Esophagus muscularis mucosa (tissue), 4 donors: ENCODE measurements at regions of chr19 and their contacts with region 1.

Region 1: DNA sequence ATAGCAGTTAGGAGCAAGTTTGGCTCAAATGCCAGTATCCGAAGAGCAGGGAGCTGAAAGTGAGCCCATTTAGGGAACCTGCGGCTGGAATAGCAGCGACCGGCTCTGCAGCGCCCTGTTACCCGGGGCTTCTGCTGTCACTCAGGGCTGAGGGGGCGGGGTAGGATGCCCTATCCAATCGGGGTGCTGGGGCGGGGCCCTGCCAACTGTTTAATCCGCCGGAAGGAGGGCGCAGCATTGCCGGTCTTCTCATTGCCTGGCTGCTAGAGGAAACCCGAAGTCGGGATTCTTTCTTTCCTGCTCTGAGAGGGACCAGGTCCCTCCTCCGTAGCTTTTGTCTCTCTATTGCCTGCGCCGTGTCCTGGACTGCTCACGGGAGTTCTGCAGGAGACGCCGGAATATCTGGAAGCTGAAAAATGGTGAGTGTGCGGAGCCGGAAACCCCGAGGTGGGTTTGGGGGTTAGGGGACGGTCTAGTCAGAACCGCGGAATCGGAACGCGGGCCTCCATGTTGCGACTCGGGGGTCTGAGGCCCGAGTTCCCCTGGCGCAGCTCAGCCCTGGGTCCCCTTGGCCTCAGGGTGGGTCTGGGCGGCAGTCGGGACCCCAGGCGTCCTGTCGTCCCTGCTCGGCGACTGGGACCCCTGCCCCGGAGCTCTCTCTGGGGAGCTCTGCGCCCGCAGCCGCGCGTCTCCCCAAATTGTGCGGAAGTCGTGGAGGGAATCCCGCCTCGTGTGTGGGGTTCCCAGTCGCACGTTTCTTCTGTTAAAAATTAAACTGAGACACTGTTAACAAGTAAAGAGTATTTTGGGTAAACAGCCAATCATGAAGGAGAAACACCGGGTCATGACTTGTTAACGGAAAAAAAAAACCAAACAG is 22.8 kb downstream of the ZNF763 start:
- DNase-seq: peak; percentile 99
- H3K4me3 ChIP-seq: peak overlapping the region; percentile 81 to 95 (median 92)
- H3K27ac ChIP-seq: peak overlapping the region; percentile 95 to 96 (median 95)
- H3K4me1 ChIP-seq: peaks cover 0 to 36% (median 21%) of the 10 kb centered on the region in 4 donors
- H3K27me3 ChIP-seq: no peaks in the 10 kb centered on the region
- CTCF ChIP-seq: peak in 1 of 3 experiments; percentile 19
- EP300 ChIP-seq: no peak
- POLR2A ChIP-seq: peak; percentile 35

Region 2: DNA sequence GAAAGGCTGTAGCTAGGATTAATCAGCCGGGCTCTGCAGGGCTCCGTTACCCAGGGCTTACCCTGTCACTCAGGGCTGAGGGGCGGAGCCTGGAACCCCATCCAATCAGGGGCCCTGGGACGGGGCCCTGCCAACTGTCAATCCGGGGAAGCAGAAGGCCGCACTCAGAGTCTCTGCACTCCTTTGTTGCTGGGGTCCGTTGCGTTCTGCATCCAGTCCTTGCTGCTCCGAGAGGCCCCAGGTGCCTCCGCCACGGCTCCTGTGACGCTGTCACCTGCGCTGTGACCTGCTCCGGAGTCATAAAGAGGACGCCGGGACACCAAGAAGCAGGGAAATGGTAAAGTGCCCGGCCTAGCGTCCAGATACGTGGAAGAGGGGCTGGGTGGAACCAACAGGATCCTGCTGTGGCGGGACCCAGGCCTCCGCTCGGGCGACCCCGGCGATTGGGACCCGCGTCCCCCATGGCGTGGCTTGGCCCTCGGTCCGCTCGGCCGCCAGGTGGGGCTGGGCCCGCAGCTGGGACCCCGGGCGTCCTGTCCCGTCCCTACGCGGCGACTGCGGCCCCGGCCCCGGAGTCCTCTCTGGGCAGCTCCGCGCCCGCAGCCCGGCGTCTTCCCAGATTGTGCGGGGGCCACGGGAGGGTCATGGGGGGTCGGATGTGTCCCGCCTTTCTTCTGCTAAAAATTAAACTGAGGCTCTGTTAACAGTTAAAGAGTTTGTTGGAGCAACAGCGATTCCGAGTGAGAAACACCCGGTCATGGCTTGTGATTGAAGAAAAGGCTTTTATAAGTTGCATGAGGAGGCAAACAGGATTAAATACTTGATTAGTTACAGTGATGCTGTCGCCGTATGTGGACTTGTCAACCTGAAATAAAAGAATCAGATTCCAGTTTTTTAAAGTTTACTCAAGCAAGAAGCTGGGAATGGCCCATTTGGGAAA is 189.0 kb before region 1 on chr19 and contains the start of gene ZNF491:
- intact Hi-C with region 1: loop called (anchors 5 kb)
- DNase-seq: peak; percentile 97
- H3K4me3 ChIP-seq: peak within 1 kb of the TSS; percentile 67 to 80 (median 76)
- H3K27ac ChIP-seq: peak within 1 kb of the TSS; percentile 83 to 90 (median 88)
- H3K4me1 ChIP-seq: peaks cover 19 to 28% (median 23%) of the 10 kb centered on the region in 4 donors
- H3K27me3 ChIP-seq: no peaks in the 10 kb centered on the region
- CTCF ChIP-seq: peak; percentile 19 to 28 (median 26)
- EP300 ChIP-seq: no peak
- POLR2A ChIP-seq: no peak
- total RNA-seq, gene ZNF491: 2.5 to 4.5 (median 3.7) TPM

Region 3: GRCh38 chr19:11881151-11881800 is 106.4 kb before region 1 on chr19:
- intact Hi-C with region 1: loop called (anchors 2 kb)
- DNase-seq: no peak
- H3K4me3 ChIP-seq: no peak overlapping the region
- H3K27ac ChIP-seq: no peak overlapping the region
- H3K4me1 ChIP-seq: peaks cover 0 to 7% (median 2%) of the 10 kb centered on the region in 4 donors
- H3K27me3 ChIP-seq: no peaks in the 10 kb centered on the region
- CTCF ChIP-seq: peak; percentile 64 to 80 (median 75)
- EP300 ChIP-seq: no peak
- POLR2A ChIP-seq: no peak

Region 4: DNA sequence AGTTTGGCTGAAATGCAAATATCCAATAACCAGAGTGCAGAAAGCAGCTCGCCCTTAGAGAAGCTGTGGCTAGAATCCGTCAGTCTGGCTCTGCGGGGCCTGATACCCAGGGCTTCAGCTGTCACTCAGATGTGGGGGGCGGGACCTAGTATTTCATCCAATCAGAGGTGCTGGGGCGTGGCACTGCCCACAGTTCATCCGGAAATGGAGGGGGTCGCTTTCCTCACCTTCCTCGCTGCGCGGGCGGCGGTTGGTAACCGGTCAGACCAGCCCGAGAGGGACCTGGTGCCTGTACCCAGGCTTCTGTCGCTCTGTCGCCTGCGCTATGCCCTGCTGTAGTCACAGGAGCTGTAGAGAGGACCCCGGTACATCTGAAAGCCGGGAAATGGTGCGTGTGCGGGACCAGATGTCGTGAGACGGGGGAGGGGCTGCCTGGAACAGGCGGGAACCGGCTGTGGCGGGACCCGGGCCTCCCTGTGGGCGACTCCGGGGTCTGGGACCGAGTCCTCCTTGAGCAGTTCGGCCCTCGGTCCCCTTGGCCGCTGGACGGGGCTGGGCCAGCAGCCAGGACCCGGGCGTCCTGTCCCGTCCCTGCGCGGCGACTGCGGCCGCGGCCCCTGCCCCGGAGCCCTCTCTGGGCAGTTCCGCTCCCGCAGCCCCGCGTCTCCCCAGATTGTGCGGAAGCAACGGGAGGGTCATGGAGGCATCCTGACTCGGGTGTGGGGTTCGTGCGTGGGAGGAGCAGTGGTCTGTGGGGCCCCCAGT is 62.6 kb before region 1 on chr19 and contains the start of gene ZNF700:
- intact Hi-C with region 1: loop called (anchors 1 kb)
- DNase-seq: peak; percentile 99
- H3K4me3 ChIP-seq: peak within 1 kb of the TSS; percentile 92 to 99 (median 93)
- H3K27ac ChIP-seq: peak within 1 kb of the TSS; percentile 93 to 97 (median 94)
- H3K4me1 ChIP-seq: peaks cover 20 to 36% (median 33%) of the 10 kb centered on the region in 4 donors
- H3K27me3 ChIP-seq: no peaks in the 10 kb centered on the region
- CTCF ChIP-seq: no peak
- EP300 ChIP-seq: peak; percentile 24
- POLR2A ChIP-seq: no peak
- total RNA-seq, gene ZNF700: 7.6 to 12.0 (median 9.5) TPM

Region 5: GRCh38 chr19:11964858-11965645 is 22.6 kb before region 1 on chr19 and contains the start of gene ZNF763:
- intact Hi-C with region 1: loop called (anchors 1 kb)
- DNase-seq: peak; percentile 99
- H3K4me3 ChIP-seq: peak within 1 kb of the TSS; percentile 65 to 91 (median 86)
- H3K27ac ChIP-seq: peak within 1 kb of the TSS; percentile 90 to 99 (median 94)
- H3K4me1 ChIP-seq: peaks cover 18 to 27% (median 22%) of the 10 kb centered on the region in 4 donors
- H3K27me3 ChIP-seq: no peaks in the 10 kb centered on the region
- CTCF ChIP-seq: no peak
- EP300 ChIP-seq: peak; percentile 40
- POLR2A ChIP-seq: no peak
- total RNA-seq, gene ZNF763: 3.3 to 7.5 (median 4.8) TPM

Region 6: GRCh38 chr19:12075538-12076139 is 88.0 kb after region 1 on chr19:
- intact Hi-C with region 1: no loop called
- DNase-seq: no peak
- H3K4me3 ChIP-seq: no peak overlapping the region
- H3K27ac ChIP-seq: no peak overlapping the region
- H3K4me1 ChIP-seq: no peaks in the 10 kb centered on the region
- H3K27me3 ChIP-seq: no peaks in the 10 kb centered on the region
- CTCF ChIP-seq: no peak
- EP300 ChIP-seq: no peak
- POLR2A ChIP-seq: no peak